Activated CD8-positive, alpha-beta T cell treated with anti-CD3 and anti-CD28 coated beads for 36 hours (primary cell): ENCODE measurements at regions of chr3 and their contacts with region 1.

Region 1: GRCh38 chr3:46860017-46860830 is 3.0 kb downstream of the MYL3 start:
- DNase-seq: peak; percentile 56
- ATAC-seq: no peak
- H3K4me3 Mint-ChIP-seq: no peak overlapping the region
- H3K27ac Mint-ChIP-seq: no peak overlapping the region
- H3K4me1 Mint-ChIP-seq: no peaks in the 10 kb centered on the region
- H3K27me3 Mint-ChIP-seq: no peaks in the 10 kb centered on the region
- CTCF ChIP-seq: peak; percentile 45

Region 2: DNA sequence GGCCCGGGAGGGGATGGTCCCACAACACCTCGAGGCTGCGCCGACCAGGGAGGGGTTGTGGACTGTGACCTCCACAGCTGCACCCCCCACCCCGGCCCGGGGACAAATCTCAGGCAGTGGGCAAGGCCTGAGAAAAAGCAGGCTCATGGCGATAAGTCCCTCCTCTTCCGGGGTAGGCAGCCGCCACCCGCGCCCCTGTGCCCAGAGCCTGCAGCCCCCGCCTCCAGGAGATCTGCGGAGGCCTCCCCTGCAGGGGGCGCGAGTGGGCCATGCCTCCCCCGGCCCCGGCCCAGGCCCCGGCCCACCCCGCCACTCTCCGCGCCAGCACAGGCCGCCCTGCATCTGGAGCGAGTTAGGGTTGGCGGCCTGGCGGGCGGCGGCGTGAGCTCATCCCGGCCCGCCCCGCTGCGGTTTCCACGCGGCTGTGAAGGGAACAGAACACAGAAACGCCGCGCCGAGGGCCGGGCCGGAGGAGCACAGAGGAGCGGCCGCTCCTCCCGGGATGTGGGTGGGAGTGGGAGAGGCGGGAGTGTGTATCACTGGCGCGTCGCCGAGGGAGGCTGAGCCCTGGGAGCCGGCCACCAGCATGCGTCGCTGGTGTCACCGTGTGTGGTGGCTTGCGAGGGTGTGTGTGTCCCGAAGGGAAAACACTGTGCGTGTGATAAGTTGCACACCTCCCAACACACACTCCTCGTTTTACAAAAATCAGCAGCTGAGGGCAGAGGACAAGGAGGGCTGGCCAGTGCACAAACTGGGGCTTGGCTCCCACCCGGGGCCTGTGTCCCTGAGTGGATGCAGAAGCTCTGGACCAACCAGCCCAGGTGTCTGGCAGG is 14.2 kb before region 1 on chr3:
- CTCF ChIA-PET with region 1: interaction called, 13 read pairs
- POLR2A ChIA-PET with region 1: no interaction called
- intact Hi-C with region 1: no loop called
- DNase-seq: peak; percentile 78
- ATAC-seq: peak; percentile 92
- H3K4me3 Mint-ChIP-seq: peak overlapping the region; percentile 65
- H3K27ac Mint-ChIP-seq: peak overlapping the region; percentile 75
- H3K4me1 Mint-ChIP-seq: peaks cover 5% of the 10 kb centered on the region
- H3K27me3 Mint-ChIP-seq: no peaks in the 10 kb centered on the region
- CTCF ChIP-seq: no peak

Region 3: GRCh38 chr3:46881789-46882376 is 21.7 kb after region 1 on chr3:
- CTCF ChIA-PET with region 1: no interaction called
- POLR2A ChIA-PET with region 1: no interaction called
- intact Hi-C with region 1: no loop called
- DNase-seq: peak; percentile 35
- ATAC-seq: peak; percentile 42
- H3K4me3 Mint-ChIP-seq: peak overlapping the region; percentile 43
- H3K27ac Mint-ChIP-seq: no peak overlapping the region
- H3K4me1 Mint-ChIP-seq: peaks cover 3% of the 10 kb centered on the region
- H3K27me3 Mint-ChIP-seq: peaks cover 41% of the 10 kb centered on the region
- CTCF ChIP-seq: no peak